Activated CD4-positive, alpha-beta T cell treated with anti-CD3 and anti-CD28 coated beads, Interleukin-2, amount 10 ng/mL, durations not matched to agents 24 days and 14 days (primary cell): ENCODE measurements at regions of chr12 and their contacts with region 1.

Region 1: DNA sequence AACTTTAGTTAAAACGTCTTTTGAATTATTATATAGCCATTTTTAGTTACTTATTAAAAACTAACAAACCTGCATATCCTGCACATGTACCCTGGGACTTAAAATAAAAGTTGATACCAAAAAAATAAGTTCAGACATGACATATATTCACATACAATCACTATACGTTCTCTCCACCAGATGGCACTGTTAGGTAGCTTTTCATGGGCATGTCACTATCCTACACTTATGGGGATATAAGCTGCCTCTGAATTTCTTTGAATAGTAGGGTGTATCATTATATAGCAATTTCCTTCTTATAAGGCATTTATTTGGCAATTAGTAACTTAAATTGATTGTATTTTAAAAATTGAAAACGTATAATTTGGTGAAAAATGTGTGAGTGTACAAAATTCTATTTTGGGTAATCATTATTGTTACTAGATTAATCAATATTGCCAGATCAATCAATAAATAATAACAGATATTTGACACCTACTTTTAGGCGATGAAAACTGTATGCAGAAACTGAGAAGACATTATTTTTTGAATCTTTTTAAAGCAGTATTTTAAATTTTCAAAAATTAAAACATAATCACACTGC is 31.8 kb upstream of the OR10A7 start:
- DNase-seq: peak; percentile 88
- H3K4me3 Mint-ChIP-seq: no peak overlapping the region
- H3K27ac Mint-ChIP-seq: no peak overlapping the region
- H3K4me1 Mint-ChIP-seq: no peaks in the 10 kb centered on the region
- H3K27me3 Mint-ChIP-seq: peaks cover 19% of the 10 kb centered on the region

Region 2: DNA sequence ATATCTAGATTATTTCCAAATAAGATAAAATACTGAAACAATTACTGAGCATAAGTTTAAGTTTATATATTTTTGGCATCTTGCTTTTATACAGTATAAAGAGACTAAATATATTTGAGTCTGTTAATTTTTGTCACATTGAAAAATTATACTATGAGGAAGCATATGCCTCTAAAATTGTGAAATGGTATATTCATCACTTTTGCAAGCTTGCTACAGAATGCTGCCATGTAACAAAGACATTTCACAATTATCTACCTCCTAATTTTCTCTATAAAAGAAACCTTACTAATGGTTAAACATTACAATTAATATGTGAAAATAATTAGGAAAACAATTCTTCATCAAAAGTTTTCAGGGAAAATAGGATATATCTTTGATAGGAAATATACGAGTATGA is 357.4 kb before region 1 on chr12:
- intact Hi-C with region 1: no loop called
- DNase-seq: no peak
- H3K4me3 Mint-ChIP-seq: no peak overlapping the region
- H3K27ac Mint-ChIP-seq: no peak overlapping the region
- H3K4me1 Mint-ChIP-seq: no peaks in the 10 kb centered on the region
- H3K27me3 Mint-ChIP-seq: peaks cover 13% of the 10 kb centered on the region

Region 3: GRCh38 chr12:54935235-54935951 is 253.7 kb before region 1 on chr12:
- intact Hi-C with region 1: no loop called
- DNase-seq: peak; percentile 83
- H3K4me3 Mint-ChIP-seq: peak overlapping the region; percentile 56
- H3K27ac Mint-ChIP-seq: peak overlapping the region; percentile 92
- H3K4me1 Mint-ChIP-seq: peaks cover 50% of the 10 kb centered on the region
- H3K27me3 Mint-ChIP-seq: no peaks in the 10 kb centered on the region

Region 4: DNA sequence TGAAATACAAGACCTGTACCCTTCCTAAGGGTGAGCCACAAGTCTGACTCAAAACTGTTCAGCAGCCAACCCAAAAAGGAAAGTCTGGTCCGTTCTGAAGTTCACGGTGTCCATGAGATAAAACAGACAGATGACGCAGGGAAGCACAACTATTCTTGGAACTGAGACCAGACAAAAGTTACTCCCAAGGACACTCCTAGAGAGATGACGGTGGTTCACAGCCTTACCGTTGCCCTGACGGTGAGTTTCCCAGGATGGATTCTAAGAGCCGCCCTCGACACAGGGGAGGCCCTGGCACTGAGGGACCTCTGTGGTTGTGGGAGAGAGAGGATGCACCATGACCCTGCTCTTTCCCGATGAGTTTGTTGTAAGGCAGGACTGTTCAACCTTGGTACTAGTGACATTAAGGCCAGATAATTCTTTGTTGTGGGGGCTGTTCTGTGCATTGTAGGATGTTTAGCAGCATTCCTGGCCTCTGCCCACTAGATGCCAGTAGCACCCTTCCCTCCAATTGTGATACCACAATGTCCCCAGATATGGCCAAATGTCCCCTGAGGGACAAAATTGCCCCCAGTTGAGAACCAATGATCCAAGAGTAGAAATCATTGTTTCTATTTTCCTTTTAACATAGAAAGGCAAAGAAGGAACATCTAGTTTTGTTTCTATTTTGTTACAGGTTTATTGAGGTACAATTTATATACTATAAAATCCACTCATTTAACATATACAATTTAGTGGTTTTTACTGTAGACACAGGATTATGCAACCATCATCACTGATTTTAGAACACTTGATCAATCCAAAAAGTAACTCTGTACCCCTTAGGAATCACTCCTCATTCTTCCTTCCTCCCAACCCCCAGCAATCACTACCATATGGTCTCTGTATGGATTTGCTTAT is 470.7 kb after region 1 on chr12:
- intact Hi-C with region 1: loop called (anchors 1 kb)
- DNase-seq: no peak
- H3K4me3 Mint-ChIP-seq: no peak overlapping the region
- H3K27ac Mint-ChIP-seq: no peak overlapping the region
- H3K4me1 Mint-ChIP-seq: no peaks in the 10 kb centered on the region
- H3K27me3 Mint-ChIP-seq: peaks cover 25% of the 10 kb centered on the region